Sciatic nerve (tissue), 2 donors: ENCODE measurements at regions of chr19 and their contacts with region 1.

Region 1: DNA sequence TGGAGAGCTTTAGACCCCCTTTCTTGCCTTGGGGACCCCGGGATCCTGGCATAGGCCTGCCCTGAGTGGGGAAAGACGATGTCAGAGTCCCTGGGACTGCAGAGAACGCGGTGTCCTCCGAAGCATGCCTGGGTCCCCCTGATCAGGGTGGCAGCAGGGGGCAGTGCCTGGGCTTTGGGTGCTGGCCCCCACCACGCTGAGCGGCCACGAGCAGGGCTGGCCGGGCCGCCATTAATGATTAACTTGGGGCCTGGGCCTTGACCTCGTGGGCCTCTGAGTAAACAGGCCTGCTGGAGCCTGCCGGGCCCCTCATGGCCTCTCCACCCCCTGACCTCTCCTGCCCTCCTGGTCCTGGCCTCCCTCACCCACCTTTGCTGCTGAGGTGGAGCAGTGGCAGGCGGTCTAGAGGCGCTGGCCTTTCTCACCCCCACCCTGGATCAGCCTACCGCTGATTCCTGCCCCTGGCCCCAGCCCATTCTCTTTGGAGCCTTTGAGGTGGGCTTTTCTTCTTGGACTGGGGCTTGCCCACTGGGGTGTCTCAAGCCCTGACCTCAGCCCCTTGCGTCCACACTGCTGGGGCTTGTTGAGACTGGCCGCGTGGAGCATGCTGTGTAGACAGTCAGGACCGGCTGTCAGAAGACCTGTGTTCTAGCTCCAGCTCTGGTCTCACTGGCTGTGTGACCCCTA is 26.3 kb downstream of the CEBPA start:
- DNase-seq: no peak
- ATAC-seq: no peak

Region 2: GRCh38 chr19:33302175-33302973 is 26.3 kb after region 1 on chr19 and contains the start of gene CEBPA:
- intact Hi-C with region 1: loop called (anchors 2 kb)
- DNase-seq: peak; percentile 89
- ATAC-seq: peak; percentile 84
- total RNA-seq, gene CEBPA: 20.4 TPM

Region 3: DNA sequence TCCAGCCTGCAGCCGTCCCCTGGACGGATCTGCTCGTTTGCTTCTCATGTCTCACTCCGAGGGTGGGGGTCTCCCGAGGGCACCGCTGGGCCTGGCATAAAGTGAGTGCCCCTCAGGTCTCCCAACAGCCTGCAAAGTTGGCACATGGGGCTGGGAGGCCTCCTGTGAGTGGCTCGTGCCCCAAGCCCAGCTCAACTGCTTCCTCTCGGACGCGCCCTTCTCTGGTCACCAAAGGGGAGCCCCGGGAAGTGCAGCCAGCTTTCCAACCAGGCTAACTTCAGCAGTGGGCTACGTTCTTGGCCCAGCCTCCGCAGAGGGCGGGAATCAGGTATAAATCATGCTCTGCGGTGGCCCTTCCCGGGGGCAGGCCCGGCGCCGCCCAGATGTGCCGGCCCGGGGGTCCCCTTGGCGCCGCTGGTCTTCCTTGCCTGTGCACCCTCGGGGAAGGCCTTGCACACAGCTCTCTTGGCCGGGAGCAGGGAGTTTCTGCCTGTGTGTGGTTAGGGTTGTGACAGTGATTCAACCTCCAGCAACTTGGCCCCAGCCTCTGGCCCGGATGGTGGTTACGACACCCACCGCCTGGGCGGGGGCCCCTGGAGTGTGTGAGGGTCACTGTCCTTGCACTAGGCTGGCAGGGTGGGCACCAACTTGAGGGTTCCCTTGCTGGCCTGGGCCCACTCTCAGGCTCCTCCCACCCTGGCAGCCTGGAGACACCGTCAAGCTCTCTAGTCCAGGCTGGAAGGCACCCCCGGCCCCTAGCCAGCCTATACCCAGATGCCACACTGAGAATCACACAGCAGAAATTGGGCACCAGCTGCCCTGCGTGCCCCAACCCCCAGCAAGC is 118.2 kb after region 1 on chr19:
- intact Hi-C with region 1: no loop called
- DNase-seq: peak; percentile 59
- ATAC-seq: peak; percentile 67